Activated CD4-positive, alpha-beta T cell treated with anti-CD3 and anti-CD28 coated beads for 36 hours (primary cell): ENCODE measurements at regions of chr19 and their contacts with region 1.

Region 1: DNA sequence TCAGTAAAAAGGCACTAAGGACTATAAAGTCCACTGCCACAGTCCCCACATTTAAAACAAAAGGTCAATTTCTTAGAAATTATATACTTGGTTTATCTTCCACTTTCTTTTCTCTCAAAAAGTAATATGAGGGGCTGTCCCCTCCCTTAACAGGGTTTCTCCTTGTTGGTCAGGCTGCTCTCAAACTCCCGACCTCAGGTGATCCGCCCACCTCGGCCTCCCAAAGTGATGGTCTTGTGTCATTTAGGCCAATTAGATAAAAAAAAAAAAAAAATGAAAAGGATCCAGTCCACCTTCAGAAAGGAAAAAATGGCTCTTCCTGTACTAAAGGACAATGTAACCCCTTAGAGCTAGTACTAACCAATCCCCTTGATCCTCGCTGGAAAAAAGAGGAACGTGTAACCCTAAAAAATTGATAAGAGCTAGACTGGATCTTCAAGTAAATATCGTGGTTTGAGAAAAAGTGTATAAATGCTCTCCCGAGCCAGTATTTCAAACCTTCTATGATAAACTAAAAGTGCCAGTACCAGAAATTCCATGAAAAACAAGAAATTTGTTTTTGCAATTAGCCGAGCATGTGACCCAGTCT is 9.0 kb upstream of the CD70 start:
- DNase-seq: no peak
- ATAC-seq: no peak
- H3K4me3 Mint-ChIP-seq: no peak overlapping the region
- H3K27ac Mint-ChIP-seq: no peak overlapping the region
- H3K4me1 Mint-ChIP-seq: peaks cover 37% of the 10 kb centered on the region
- H3K27me3 Mint-ChIP-seq: peaks cover 6% of the 10 kb centered on the region

Region 2: GRCh38 chr19:6616011-6616410 is 16.1 kb after region 1 on chr19:
- CTCF ChIA-PET with region 1: interaction called, 5 read pairs
- POLR2A ChIA-PET with region 1: no interaction called
- intact Hi-C with region 1: loop called (anchors 1 to 2 kb)
- DNase-seq: peak; percentile 53
- ATAC-seq: peak; percentile 88
- H3K4me3 Mint-ChIP-seq: no peak overlapping the region
- H3K27ac Mint-ChIP-seq: peak overlapping the region; percentile 29
- H3K4me1 Mint-ChIP-seq: peaks cover 29% of the 10 kb centered on the region
- H3K27me3 Mint-ChIP-seq: peaks cover 32% of the 10 kb centered on the region

Region 3: GRCh38 chr19:6685962-6686627 is 86.1 kb after region 1 on chr19:
- CTCF ChIA-PET with region 1: no interaction called
- POLR2A ChIA-PET with region 1: no interaction called
- intact Hi-C with region 1: no loop called
- DNase-seq: no peak
- ATAC-seq: no peak
- H3K4me3 Mint-ChIP-seq: no peak overlapping the region
- H3K27ac Mint-ChIP-seq: no peak overlapping the region
- H3K4me1 Mint-ChIP-seq: peaks cover 18% of the 10 kb centered on the region
- H3K27me3 Mint-ChIP-seq: peaks cover 3% of the 10 kb centered on the region

Region 4: DNA sequence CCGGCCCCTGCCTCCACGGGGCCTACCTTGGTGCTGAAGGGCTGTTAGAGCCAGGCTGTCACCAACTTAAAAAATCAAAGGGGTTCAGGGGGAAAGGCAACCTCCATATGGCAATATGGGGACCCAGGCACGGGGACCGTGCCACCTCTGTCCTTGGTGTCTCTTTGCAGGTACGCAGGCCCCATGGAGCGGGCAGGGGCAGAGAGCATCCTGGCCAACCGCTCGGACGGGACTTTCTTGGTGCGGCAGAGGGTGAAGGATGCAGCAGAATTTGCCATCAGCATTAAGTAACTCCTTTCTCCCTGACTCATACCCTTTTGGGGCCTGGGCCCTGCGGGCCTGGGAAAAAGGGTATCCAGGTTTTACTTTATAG is 247.9 kb after region 1 on chr19:
- CTCF ChIA-PET with region 1: no interaction called
- POLR2A ChIA-PET with region 1: no interaction called
- intact Hi-C with region 1: no loop called
- DNase-seq: no peak
- ATAC-seq: no peak
- H3K4me3 Mint-ChIP-seq: no peak overlapping the region
- H3K27ac Mint-ChIP-seq: no peak overlapping the region
- H3K4me1 Mint-ChIP-seq: no peaks in the 10 kb centered on the region
- H3K27me3 Mint-ChIP-seq: no peaks in the 10 kb centered on the region